ENCODE measurements at regions of chr12 and their contacts with region 1.

Region 1: GRCh38 chr12:93089805-93090569 is 160.9 kb upstream of the EEA1 start:
- DNase-seq: peak; percentile 43
- H3K4me3 Mint-ChIP-seq: no peak overlapping the region
- H3K27ac Mint-ChIP-seq: peak overlapping the region; percentile 85
- H3K4me1 Mint-ChIP-seq: peaks cover 64% of the 10 kb centered on the region
- H3K27me3 Mint-ChIP-seq: no peaks in the 10 kb centered on the region
- CTCF ChIP-seq: no peak

Region 2: DNA sequence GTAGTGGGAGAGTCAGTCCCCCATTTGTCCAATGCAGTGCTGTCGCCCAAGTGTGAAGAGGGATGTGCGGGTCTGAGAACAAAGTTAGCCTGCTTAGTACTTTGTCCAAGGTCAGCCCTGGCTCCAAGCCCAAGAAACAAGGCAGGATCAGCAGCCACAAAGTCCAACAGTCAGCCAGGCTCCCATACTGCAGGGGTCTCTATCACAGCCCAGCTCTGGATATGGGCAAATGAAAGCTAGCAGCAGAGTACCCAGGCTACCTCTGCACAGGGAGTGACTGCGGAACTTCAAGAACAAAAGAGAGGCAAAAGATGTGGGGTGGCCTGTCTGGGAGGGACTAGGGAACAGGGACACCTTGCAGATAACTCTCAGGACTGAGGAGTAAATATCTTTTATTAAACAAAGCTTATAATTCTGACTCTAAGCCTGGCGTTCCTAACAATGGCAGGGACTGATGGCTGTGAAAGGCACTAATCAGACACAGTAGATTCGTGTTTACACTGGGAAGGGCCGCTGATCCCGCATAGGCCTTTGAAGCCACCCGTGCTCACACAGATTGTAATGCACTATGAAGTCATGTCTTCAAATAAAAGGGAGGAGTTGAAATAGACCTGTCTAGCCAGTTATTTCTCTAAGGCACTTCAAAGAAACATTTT is 69.9 kb before region 1 on chr12:
- CTCF ChIA-PET with region 1: no interaction called
- intact Hi-C with region 1: loop called (anchors 2 kb)
- DNase-seq: peak; percentile 64
- H3K4me3 Mint-ChIP-seq: no peak overlapping the region
- H3K27ac Mint-ChIP-seq: peak overlapping the region; percentile 86
- H3K4me1 Mint-ChIP-seq: peaks cover 66% of the 10 kb centered on the region
- H3K27me3 Mint-ChIP-seq: no peaks in the 10 kb centered on the region
- CTCF ChIP-seq: no peak

Region 3: GRCh38 chr12:93072340-93072739 is 17.6 kb before region 1 on chr12:
- CTCF ChIA-PET with region 1: no interaction called
- intact Hi-C with region 1: no loop called
- DNase-seq: no peak
- H3K4me3 Mint-ChIP-seq: no peak overlapping the region
- H3K27ac Mint-ChIP-seq: no peak overlapping the region
- H3K4me1 Mint-ChIP-seq: no peaks in the 10 kb centered on the region
- H3K27me3 Mint-ChIP-seq: no peaks in the 10 kb centered on the region
- CTCF ChIP-seq: no peak

Region 4: DNA sequence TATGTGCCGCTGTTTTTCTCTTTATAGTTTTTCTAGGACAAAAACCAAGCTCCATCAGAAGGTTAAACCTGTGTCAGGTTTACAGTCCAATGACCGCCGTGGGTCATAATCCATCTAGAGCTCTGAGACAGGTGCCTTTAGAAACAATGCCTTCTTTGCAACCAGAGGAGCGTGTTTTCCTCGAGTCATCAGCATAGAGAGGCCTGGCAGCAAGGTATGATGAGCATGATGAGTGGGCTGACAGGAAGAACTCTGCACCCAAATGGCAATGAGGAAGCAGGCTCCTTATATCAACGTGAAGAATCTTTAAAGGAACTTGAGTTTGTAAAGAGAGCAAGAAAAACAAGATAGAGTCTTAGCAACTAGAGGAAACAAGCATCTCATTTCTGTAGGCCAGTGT is 227.2 kb after region 1 on chr12:
- CTCF ChIA-PET with region 1: no interaction called
- intact Hi-C with region 1: loop called (anchors 2 kb)
- DNase-seq: peak; percentile 14
- H3K4me3 Mint-ChIP-seq: no peak overlapping the region
- H3K27ac Mint-ChIP-seq: peak overlapping the region; percentile 50
- H3K4me1 Mint-ChIP-seq: peaks cover 64% of the 10 kb centered on the region
- H3K27me3 Mint-ChIP-seq: no peaks in the 10 kb centered on the region
- CTCF ChIP-seq: no peak

Measured in Calu3 (cell line).